ENCODE measurements at regions of chr9 and their contacts with region 1.

Region 1: GRCh38 chr9:88084357-88085183 is 53.7 kb downstream of the SPATA31C2 start:
- DNase-seq: no peak
- ATAC-seq: no peak
- H3K4me3 Mint-ChIP-seq: no peak overlapping the region
- H3K27ac Mint-ChIP-seq: no peak overlapping the region
- H3K4me1 Mint-ChIP-seq: no peaks in the 10 kb centered on the region
- H3K27me3 Mint-ChIP-seq: peaks cover 11% of the 10 kb centered on the region

Region 2: GRCh38 chr9:89008744-89009545 is 924.4 kb after region 1 on chr9:
- CTCF ChIA-PET with region 1: no interaction called
- POLR2A ChIA-PET with region 1: interaction called, 10 read pairs
- intact Hi-C with region 1: no loop called
- DNase-seq: no peak
- ATAC-seq: no peak
- H3K4me3 Mint-ChIP-seq: no peak overlapping the region
- H3K27ac Mint-ChIP-seq: no peak overlapping the region
- H3K4me1 Mint-ChIP-seq: no peaks in the 10 kb centered on the region
- H3K27me3 Mint-ChIP-seq: peaks cover 7% of the 10 kb centered on the region

Measured in activated CD4-positive, alpha-beta T cell treated with anti-CD3 and anti-CD28 coated beads for 36 hours (primary cell).